Thyroid gland (tissue), 4 donors: ENCODE measurements at regions of chr3 and their contacts with region 1.

Region 1: DNA sequence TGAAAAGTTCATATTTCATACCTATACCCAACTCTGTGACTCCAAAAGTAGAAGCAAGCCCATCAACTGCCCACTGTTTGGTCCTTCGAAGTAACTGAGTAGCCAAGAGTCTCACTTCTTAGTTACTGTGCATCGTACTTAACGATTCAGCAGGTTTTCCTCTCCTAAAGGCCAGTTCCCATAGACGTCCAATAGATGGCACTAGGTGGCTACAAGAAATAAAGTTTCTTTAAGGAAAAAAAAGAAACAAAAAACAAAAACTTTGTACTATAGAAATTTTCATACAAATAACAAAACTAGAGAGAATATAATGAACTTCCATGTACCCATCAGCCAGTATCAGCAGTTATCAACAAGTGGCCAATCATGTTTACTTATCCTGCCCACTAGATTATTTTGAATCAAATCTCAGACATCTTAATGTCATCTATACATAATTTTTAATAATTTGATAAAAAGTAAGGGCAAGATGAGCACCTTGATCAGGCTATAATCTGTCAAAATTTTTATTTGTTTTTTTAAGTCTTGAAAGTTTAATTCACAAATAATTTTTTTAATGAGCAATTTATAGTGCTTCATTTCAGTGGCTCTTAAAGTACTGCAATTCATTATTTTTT is 63.8 kb upstream of the ACP3 start:
- DNase-seq: peak; percentile 20 to 27
- H3K4me3 ChIP-seq: no peak overlapping the region
- H3K27ac ChIP-seq: no peak overlapping the region
- H3K4me1 ChIP-seq: peaks cover 4 to 17% of the 10 kb centered on the region in 2 donors
- H3K27me3 ChIP-seq: no peaks in the 10 kb centered on the region
- CTCF ChIP-seq: peak; percentile 21 to 78 (median 76)
- POLR2A ChIP-seq: no peak

Region 2: DNA sequence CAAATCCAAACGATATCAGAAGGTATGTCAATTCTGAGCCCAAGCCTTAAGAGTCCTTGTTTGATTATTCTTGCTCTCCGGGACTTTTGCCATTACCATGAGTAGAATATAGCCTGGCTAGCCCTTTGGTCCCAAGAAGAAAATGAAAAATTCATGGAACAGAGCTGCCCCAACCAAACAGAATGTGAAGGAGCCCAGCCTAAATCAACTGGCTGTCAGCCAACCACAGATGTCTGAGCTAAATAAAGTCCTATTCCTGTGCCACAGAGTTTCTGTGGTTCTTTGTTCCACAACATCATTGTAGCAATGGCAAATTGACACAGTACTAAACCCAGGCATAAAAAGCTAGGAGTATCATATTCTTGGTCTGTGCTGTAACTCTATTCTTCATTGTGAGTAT is 403.8 kb before region 1 on chr3:
- intact Hi-C with region 1: no loop called
- DNase-seq: peak; percentile 23 to 51
- H3K4me3 ChIP-seq: no peak overlapping the region
- H3K27ac ChIP-seq: no peak overlapping the region
- H3K4me1 ChIP-seq: no peaks in the 10 kb centered on the region
- H3K27me3 ChIP-seq: no peaks in the 10 kb centered on the region
- CTCF ChIP-seq: no peak
- POLR2A ChIP-seq: no peak

Region 3: DNA sequence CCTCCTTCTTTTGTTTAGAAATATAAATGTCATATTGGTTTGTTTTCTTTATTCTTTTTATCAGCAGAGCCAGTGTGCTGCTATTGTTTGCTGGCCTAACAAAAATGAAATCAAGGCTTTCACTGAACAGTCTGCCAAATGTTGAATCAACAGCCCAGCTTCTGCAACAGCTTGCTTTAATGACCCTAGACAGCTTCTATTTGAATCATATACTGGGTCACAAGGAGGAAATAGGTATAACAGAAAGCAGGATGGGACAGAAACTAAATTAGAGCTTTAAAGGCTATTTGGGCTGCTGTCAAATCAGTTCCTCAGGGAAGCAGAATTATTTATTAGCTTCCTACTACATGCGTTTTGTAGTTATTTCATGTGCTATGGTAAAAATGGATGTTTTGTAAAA is 151.8 kb after region 1 on chr3:
- intact Hi-C with region 1: loop called (anchors 10 kb)
- DNase-seq: no peak
- H3K4me3 ChIP-seq: no peak overlapping the region
- H3K27ac ChIP-seq: no peak overlapping the region
- H3K4me1 ChIP-seq: peaks cover 13 to 17% of the 10 kb centered on the region in 2 donors
- H3K27me3 ChIP-seq: no peaks in the 10 kb centered on the region
- CTCF ChIP-seq: no peak
- POLR2A ChIP-seq: no peak